Activated B cell treated with CpG ODN at 0.5 μM for 24 hours (primary cell): ENCODE measurements at regions of chr5 and their contacts with region 1.

Region 1: DNA sequence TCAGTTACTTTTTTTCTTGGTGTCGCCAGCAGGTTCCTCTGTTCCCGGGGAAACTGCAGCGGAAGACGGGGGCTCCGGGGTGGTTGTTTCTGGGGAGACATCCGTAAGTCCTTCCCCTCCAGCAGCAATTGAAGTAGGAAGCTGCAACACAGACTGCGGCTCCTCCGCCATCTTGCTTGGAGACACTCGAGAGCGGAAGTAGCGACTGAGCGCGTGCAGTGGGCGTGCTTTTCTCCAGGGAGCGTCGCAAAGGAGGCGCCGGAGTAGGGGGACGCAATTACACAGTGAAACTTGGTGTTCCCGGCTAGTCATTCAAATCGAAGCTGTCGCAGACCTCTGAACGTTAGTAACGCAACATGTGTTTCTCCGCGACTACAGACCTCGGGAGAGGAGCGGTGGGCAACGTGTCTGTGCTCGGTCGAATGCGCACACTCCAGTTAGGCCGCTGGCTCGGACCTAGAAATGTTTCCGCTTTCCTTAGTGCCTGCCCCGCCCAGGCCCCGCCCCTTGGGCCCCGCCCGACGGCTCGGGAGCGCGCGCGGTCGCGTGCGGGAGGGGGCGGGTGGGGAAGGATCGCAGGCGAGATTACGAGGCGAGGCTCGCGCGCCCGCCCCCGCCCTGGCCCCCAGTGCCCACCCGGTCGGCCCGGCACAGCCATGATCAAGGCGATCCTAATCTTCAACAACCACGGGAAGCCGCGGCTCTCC is at the starts of genes AP3S1 and ATG12:
- DNase-seq: peak; percentile 96
- ATAC-seq: peak; percentile 81
- H3K4me3 Mint-ChIP-seq: peak within 1 kb of the TSS; percentile 98
- H3K27ac Mint-ChIP-seq: peak within 1 kb of the TSS; percentile 100
- H3K4me1 Mint-ChIP-seq: peaks cover 67% of the 10 kb centered on the region
- H3K27me3 Mint-ChIP-seq: no peaks in the 10 kb centered on the region
- CTCF ChIP-seq: no peak
- total RNA-seq, gene AP3S1: 41.5 and 43.2 TPM in 2 replicates
- total RNA-seq, gene ATG12: 54.8 and 73.9 TPM in 2 replicates

Region 2: DNA sequence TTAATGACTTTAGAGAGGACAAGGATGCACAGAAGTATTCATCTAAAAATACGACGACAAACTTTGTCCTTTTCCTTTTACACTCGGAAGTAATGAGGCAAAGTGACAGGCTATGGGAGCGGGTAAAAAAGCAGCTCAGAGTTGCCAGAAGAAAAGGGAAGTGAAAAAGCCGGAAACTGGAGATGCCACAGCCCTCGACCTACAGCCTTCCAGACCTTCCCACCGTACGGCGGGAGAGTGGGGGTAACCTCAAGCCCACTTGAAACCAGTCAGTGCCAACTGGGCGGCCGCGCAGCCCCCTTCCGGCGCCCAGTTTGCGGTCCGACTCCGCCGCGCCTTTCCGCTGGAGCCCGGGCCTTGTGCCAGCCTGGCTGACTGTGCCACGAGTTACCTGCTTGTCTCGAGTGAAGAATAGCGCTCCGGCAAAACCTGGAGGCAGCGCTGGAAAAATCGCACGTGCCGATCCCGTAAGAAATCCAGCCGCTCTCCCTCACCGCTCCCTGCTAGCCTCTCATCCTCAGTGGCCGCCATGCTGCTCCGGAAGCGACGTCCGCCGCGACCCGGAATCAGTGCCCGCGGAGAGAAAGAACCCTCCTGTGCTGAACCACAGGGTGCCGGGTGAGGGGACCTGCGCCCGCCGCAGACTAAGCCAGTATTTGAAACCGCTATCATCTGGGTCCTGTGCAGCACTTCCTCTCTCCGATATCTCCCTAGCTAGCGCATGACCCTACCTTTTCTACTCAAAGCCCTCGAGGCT is 579.0 kb before region 1 on chr5 and contains the start of gene PGGT1B:
- CTCF ChIA-PET with region 1: no interaction called
- POLR2A ChIA-PET with region 1: interaction called, 7 read pairs
- intact Hi-C with region 1: loop called (anchors 1 kb)
- DNase-seq: peak; percentile 63
- ATAC-seq: peak; percentile 91
- H3K4me3 Mint-ChIP-seq: peak within 1 kb of the TSS; percentile 99
- H3K27ac Mint-ChIP-seq: peak within 1 kb of the TSS; percentile 96
- H3K4me1 Mint-ChIP-seq: peaks cover 52% of the 10 kb centered on the region
- H3K27me3 Mint-ChIP-seq: no peaks in the 10 kb centered on the region
- CTCF ChIP-seq: no peak
- total RNA-seq, gene PGGT1B: 52.1 and 52.9 TPM in 2 replicates

Region 3: GRCh38 chr5:115349020-115349817 is 492.3 kb before region 1 on chr5:
- CTCF ChIA-PET with region 1: no interaction called
- POLR2A ChIA-PET with region 1: no interaction called
- intact Hi-C with region 1: no loop called
- DNase-seq: no peak
- ATAC-seq: no peak
- H3K4me3 Mint-ChIP-seq: no peak overlapping the region
- H3K27ac Mint-ChIP-seq: no peak overlapping the region
- H3K4me1 Mint-ChIP-seq: no peaks in the 10 kb centered on the region
- H3K27me3 Mint-ChIP-seq: peaks cover 11% of the 10 kb centered on the region
- CTCF ChIP-seq: no peak

Region 4: DNA sequence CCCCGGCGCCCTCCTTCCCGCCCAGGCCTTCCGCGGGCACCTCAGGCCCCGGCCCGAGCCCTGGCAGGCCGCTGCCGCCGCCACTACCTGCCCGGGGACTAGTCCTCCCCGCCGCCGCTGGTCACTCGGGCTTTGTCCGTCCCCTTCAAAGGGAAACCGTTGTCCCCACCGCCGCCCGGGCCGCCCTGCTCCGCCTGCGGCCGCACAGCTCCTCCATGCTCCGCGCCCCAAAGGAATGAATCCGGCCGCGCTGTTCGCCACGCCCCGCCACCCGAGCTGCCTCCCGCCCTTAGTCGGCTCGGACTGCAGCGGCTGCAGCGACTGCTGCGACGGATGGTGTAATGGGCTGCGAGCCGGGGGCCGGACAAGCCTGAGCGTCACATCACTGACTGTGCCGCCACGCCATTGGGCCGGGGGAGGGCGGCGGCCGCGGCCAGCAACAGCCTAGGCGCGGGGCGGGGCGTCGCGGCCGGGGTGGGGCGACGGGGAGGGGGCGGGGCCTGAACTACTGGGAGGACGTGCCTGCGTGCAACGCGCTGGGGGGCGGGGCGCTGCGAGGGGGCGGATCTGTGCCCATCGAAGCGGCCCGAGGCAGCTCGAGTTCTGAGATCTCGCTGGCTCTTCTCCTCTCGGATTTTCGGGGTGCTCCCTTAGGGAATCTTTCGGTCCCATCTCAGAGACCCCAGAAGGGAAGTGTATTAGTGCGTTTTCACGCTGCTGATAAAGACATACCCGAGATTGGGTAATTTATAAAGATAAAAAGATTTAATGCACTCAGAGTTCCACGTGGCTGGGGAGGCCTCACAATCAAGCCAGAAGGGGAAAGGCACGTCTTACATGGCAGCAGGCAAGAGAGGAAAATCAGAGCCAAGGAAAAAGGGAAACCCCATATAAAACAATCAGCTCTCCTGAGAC is 296.8 kb before region 1 on chr5 and contains the start of gene FEM1C:
- CTCF ChIA-PET with region 1: no interaction called
- POLR2A ChIA-PET with region 1: interaction called, 10 read pairs
- intact Hi-C with region 1: loop called (anchors 1 kb)
- DNase-seq: peak; percentile 94
- ATAC-seq: peak; percentile 95
- H3K4me3 Mint-ChIP-seq: peak within 1 kb of the TSS; percentile 98
- H3K27ac Mint-ChIP-seq: peak within 1 kb of the TSS; percentile 96
- H3K4me1 Mint-ChIP-seq: peaks cover 51% of the 10 kb centered on the region
- H3K27me3 Mint-ChIP-seq: no peaks in the 10 kb centered on the region
- CTCF ChIP-seq: no peak
- total RNA-seq, gene FEM1C: 19.1 and 19.8 TPM in 2 replicates

Region 5: GRCh38 chr5:115634343-115635132 is 207.0 kb before region 1 on chr5:
- CTCF ChIA-PET with region 1: interaction called, 6 read pairs
- POLR2A ChIA-PET with region 1: no interaction called
- intact Hi-C with region 1: loop called (anchors 1 kb)
- DNase-seq: peak; percentile 74
- ATAC-seq: peak; percentile 91
- H3K4me3 Mint-ChIP-seq: peak overlapping the region; percentile 41
- H3K27ac Mint-ChIP-seq: no peak overlapping the region
- H3K4me1 Mint-ChIP-seq: peaks cover 9% of the 10 kb centered on the region
- H3K27me3 Mint-ChIP-seq: peaks cover 4% of the 10 kb centered on the region
- CTCF ChIP-seq: peak; percentile 76

Region 6: DNA sequence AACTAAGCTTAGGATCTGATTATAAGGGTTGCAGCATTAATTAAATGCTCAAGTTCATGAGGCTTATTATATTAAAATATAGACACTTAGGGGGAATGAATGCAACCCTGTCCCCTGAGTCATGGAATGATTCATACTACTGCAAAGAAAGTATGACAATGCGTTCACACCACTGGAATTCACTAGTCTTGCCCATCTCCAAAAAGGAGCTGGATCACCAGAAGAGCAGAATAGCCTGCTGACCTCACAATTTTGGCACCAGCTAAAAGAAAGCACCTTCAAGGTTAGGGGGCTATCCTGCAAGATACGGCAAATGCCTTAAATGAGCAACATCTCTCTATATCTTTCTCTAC is 183.7 kb before region 1 on chr5:
- CTCF ChIA-PET with region 1: no interaction called
- POLR2A ChIA-PET with region 1: no interaction called
- intact Hi-C with region 1: no loop called
- DNase-seq: no peak
- ATAC-seq: no peak
- H3K4me3 Mint-ChIP-seq: no peak overlapping the region
- H3K27ac Mint-ChIP-seq: no peak overlapping the region
- H3K4me1 Mint-ChIP-seq: no peaks in the 10 kb centered on the region
- H3K27me3 Mint-ChIP-seq: peaks cover 6% of the 10 kb centered on the region
- CTCF ChIP-seq: no peak

Region 7: DNA sequence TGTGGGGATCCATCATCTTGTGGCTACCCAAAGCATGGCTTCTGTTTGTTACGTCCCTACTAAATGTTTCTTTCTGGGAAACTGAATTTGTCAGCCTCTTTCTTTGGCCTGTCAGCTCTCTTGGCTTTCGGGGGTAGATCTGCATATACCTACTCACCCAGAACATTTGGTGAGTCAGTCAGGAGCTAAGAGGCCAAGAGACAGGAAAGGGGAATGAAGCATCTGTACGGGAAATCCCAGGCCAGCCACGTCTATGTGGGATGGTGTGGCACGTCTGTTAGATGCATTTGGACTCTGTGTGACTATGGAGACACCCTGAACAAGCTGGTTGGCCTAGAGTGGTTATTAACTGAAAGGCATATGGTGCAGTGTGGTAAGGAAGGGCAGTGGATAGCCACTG is 83.2 kb before region 1 on chr5:
- CTCF ChIA-PET with region 1: no interaction called
- POLR2A ChIA-PET with region 1: no interaction called
- intact Hi-C with region 1: no loop called
- DNase-seq: no peak
- ATAC-seq: no peak
- H3K4me3 Mint-ChIP-seq: no peak overlapping the region
- H3K27ac Mint-ChIP-seq: no peak overlapping the region
- H3K4me1 Mint-ChIP-seq: no peaks in the 10 kb centered on the region
- H3K27me3 Mint-ChIP-seq: peaks cover 3% of the 10 kb centered on the region
- CTCF ChIP-seq: no peak

Region 8: GRCh38 chr5:115940126-115940810 is 98.7 kb after region 1 on chr5:
- CTCF ChIA-PET with region 1: no interaction called
- POLR2A ChIA-PET with region 1: no interaction called
- intact Hi-C with region 1: no loop called
- DNase-seq: no peak
- ATAC-seq: no peak
- H3K4me3 Mint-ChIP-seq: no peak overlapping the region
- H3K27ac Mint-ChIP-seq: no peak overlapping the region
- H3K4me1 Mint-ChIP-seq: no peaks in the 10 kb centered on the region
- H3K27me3 Mint-ChIP-seq: no peaks in the 10 kb centered on the region
- CTCF ChIP-seq: no peak

Region 9: GRCh38 chr5:116076496-116076895 is 235.0 kb after region 1 on chr5:
- CTCF ChIA-PET with region 1: no interaction called
- POLR2A ChIA-PET with region 1: interaction called, 8 read pairs
- intact Hi-C with region 1: loop called (anchors 1 kb)
- DNase-seq: no peak
- ATAC-seq: peak; percentile 95
- H3K4me3 Mint-ChIP-seq: peak overlapping the region; percentile 76
- H3K27ac Mint-ChIP-seq: peak overlapping the region; percentile 88
- H3K4me1 Mint-ChIP-seq: peaks cover 29% of the 10 kb centered on the region
- H3K27me3 Mint-ChIP-seq: no peaks in the 10 kb centered on the region
- CTCF ChIP-seq: no peak